CD4-positive, alpha-beta T cell (primary cell): ENCODE measurements at regions of chr9 and their contacts with region 1.

Region 1: DNA sequence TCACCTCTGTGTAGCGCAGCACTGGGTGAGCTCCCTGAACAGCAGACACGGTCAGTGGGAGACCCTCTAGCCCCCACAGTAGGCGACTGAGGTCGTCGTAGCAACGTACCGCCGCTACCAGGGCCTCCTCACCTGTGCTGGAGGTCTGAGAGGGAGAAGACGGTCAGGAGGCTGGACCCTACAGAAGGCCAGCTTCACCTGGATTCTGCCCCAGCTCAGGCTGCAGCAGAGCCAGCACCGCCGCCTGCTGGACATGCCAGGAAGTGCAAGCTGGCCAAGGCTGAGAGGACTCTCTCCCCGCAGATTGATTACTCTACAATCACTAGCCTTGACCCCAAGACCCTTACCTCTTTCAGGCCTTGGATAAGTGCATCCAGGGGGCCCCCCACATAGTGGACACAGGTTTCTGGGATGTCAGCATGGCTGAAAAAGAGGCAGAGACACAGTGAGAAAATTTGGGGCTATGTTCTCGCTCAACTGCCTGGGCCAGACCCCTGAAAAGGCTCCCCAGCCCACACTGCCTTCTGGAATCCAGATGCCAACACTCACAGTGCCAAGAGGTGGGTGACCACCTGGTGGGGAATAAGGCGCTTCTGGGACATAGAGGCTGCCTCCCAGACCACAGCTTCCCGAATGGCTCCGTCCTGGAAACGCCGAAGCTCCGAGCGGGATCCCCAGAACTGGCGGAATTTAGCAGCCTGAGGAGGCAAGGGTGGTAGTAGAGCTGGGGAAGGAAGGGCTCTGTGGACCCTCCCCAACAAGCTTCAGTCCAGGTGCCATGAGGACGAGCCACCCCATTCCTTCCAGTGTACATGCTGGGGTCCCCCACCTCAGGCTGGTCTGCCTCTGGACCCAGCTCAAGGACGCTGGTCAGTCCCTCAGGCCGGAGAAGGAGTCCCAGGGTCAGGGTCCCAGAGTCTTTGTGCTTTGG is 6.9 kb downstream of the NOL6 start:
- DNase-seq: peak; percentile 62 to 86 (median 77)
- ATAC-seq: peak; percentile 86
- H3K4me3 ChIP-seq: no peak overlapping the region
- H3K4me3 Mint-ChIP-seq: no peak overlapping the region
- H3K27ac ChIP-seq: peak overlapping the region in 1 of 2 donors; percentile 21
- H3K27ac Mint-ChIP-seq: peak overlapping the region; percentile 47
- H3K4me1 ChIP-seq: peaks cover 15% of the 10 kb centered on the region
- H3K4me1 Mint-ChIP-seq: peaks cover 8% of the 10 kb centered on the region
- H3K27me3 ChIP-seq: no peaks in the 10 kb centered on the region
- H3K27me3 Mint-ChIP-seq: no peaks in the 10 kb centered on the region
- CTCF ChIP-seq: peak; percentile 96

Region 2: GRCh38 chr9:33364127-33364526 is 102.7 kb before region 1 on chr9:
- CTCF ChIA-PET with region 1: no interaction called
- POLR2A ChIA-PET with region 1: no interaction called
- intact Hi-C with region 1: no loop called
- DNase-seq: no peak
- ATAC-seq: no peak
- H3K4me3 ChIP-seq: no peak overlapping the region
- H3K4me3 Mint-ChIP-seq: no peak overlapping the region
- H3K27ac ChIP-seq: no peak overlapping the region
- H3K27ac Mint-ChIP-seq: no peak overlapping the region
- H3K4me1 ChIP-seq: no peaks in the 10 kb centered on the region
- H3K4me1 Mint-ChIP-seq: no peaks in the 10 kb centered on the region
- H3K27me3 ChIP-seq: no peaks in the 10 kb centered on the region
- H3K27me3 Mint-ChIP-seq: no peaks in the 10 kb centered on the region
- CTCF ChIP-seq: no peak

Region 3: DNA sequence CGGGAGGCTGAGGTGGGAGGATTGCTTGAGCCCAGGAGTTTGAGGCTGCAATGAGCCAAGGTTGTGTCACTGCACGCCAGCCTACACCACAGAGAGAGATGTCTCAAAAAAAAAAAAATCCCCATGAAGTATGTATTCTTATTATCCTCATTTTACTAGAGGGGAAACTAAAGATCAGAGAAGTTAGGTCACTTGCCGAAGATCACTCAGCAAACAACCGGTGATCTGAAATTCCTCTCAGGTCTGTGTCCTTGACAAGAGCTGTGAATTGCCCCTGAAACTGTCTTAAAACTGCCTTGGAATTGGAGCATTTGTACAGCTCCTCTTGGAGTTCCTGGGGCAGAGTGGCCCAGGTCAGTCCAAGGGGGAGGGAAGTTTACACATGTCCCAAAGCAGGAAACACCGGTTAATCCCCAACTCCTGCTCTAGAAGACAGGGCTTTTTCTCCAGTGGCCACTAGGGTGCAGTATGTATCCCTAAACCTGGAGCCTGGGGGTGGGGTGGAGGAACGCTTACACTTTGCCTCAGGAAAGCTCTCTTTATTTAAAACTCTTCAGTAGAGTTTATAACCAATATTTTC is 92.1 kb before region 1 on chr9:
- CTCF ChIA-PET with region 1: interaction called, 37 read pairs
- POLR2A ChIA-PET with region 1: interaction called, 5 read pairs
- intact Hi-C with region 1: loop called (anchors 1 kb)
- DNase-seq: peak; percentile 48 to 82 (median 62)
- ATAC-seq: peak; percentile 96
- H3K4me3 ChIP-seq: peak overlapping the region; percentile 17
- H3K4me3 Mint-ChIP-seq: peak overlapping the region; percentile 56
- H3K27ac ChIP-seq: no peak overlapping the region
- H3K27ac Mint-ChIP-seq: peak overlapping the region; percentile 45
- H3K4me1 ChIP-seq: peaks cover 8% of the 10 kb centered on the region
- H3K4me1 Mint-ChIP-seq: peaks cover 16% of the 10 kb centered on the region
- H3K27me3 ChIP-seq: no peaks in the 10 kb centered on the region
- H3K27me3 Mint-ChIP-seq: no peaks in the 10 kb centered on the region
- CTCF ChIP-seq: peak; percentile 86

Region 4: DNA sequence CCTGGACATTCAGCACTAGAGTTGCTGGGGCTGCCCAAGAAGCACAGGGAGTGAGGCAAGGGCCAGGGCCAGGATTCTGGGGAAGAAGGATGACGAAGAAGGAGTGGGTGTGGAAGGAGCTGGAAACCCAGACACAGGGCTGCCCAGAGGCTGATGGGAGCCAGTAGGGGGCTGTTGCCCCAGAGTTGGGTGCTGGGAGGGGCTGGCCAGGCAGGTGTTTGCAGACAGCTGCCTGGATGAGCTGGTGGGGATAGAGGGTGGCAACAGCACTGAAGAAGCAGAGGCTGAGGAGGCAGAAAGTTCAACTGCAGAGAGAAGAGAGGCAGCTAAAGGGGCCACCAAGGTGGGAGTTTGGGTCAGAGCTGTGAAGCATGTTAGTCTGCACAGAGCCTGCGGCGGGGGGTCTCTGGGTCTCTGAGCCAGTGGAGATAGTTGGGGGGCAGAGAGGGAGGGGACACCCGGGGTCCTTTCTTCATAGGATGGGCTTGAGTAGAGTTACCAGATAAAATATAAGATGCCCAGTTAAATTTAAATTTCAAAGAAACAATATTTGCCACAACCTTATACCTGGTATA is 62.0 kb before region 1 on chr9:
- CTCF ChIA-PET with region 1: interaction called, 36 read pairs
- POLR2A ChIA-PET with region 1: interaction called, 11 read pairs
- intact Hi-C with region 1: loop called (anchors 1 kb)
- DNase-seq: peak in 1 of 14 experiments; percentile 11
- ATAC-seq: no peak
- H3K4me3 ChIP-seq: no peak overlapping the region
- H3K4me3 Mint-ChIP-seq: no peak overlapping the region
- H3K27ac ChIP-seq: no peak overlapping the region
- H3K27ac Mint-ChIP-seq: peak overlapping the region; percentile 45
- H3K4me1 ChIP-seq: peaks cover 14% of the 10 kb centered on the region
- H3K4me1 Mint-ChIP-seq: peaks cover 6% of the 10 kb centered on the region
- H3K27me3 ChIP-seq: no peaks in the 10 kb centered on the region
- H3K27me3 Mint-ChIP-seq: no peaks in the 10 kb centered on the region
- CTCF ChIP-seq: no peak

Region 5: GRCh38 chr9:33446946-33447798 is 19.7 kb before region 1 on chr9 and contains the start of gene AQP3:
- CTCF ChIA-PET with region 1: interaction called, 33 read pairs
- POLR2A ChIA-PET with region 1: interaction called, 52 read pairs
- intact Hi-C with region 1: loop called (anchors 2 kb)
- DNase-seq: peak; percentile 63 to 89 (median 75)
- ATAC-seq: peak; percentile 51
- H3K4me3 ChIP-seq: peak within 1 kb of the TSS; percentile 90
- H3K4me3 Mint-ChIP-seq: peak within 1 kb of the TSS; percentile 97
- H3K27ac ChIP-seq: peak within 1 kb of the TSS; percentile 83 to 91
- H3K27ac Mint-ChIP-seq: peak within 1 kb of the TSS; percentile 99
- H3K4me1 ChIP-seq: peaks cover 69% of the 10 kb centered on the region
- H3K4me1 Mint-ChIP-seq: peaks cover 52% of the 10 kb centered on the region
- H3K27me3 ChIP-seq: no peaks in the 10 kb centered on the region
- H3K27me3 Mint-ChIP-seq: no peaks in the 10 kb centered on the region
- CTCF ChIP-seq: peak; percentile 53
- total RNA-seq, gene AQP3: 99.8 to 106 TPM

Region 6: GRCh38 chr9:33452828-33453271 is 14.0 kb before region 1 on chr9:
- CTCF ChIA-PET with region 1: interaction called, 33 read pairs
- POLR2A ChIA-PET with region 1: interaction called, 67 read pairs
- intact Hi-C with region 1: no loop called
- DNase-seq: peak in 11 of 14 experiments; percentile 27 to 77 (median 52)
- ATAC-seq: peak; percentile 50
- H3K4me3 ChIP-seq: no peak overlapping the region
- H3K4me3 Mint-ChIP-seq: peak overlapping the region; percentile 54
- H3K27ac ChIP-seq: peak overlapping the region; percentile 4 to 21
- H3K27ac Mint-ChIP-seq: peak overlapping the region; percentile 90
- H3K4me1 ChIP-seq: peaks cover 72% of the 10 kb centered on the region
- H3K4me1 Mint-ChIP-seq: peaks cover 60% of the 10 kb centered on the region
- H3K27me3 ChIP-seq: no peaks in the 10 kb centered on the region
- H3K27me3 Mint-ChIP-seq: no peaks in the 10 kb centered on the region
- CTCF ChIP-seq: peak; percentile 70